ENCODE measurements at regions of chrX and their contacts with region 1.

Region 1: DNA sequence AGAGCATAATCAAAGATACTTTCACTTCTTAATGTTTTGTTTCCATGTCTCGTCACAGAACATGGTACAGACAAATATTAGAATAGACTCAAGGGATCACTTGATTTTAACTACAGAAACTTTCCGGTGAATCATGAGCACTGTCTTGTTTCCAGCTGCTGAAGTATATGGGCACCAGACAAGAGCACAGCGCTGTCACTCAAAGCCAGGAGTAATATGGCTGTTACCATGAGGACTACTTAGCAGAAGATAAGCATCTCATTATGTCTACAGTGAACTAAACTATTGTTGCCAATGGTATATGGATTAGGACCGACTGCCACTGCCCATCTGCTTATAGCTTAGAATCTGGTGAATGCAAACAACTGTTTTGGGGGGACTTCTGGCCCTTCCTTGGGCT is 34.3 kb downstream of the MECP2 start:
- DNase-seq: no peak
- H3K4me3 ChIP-seq: no peak overlapping the region
- H3K27ac ChIP-seq: no peak overlapping the region
- H3K4me1 ChIP-seq: peaks cover 7% of the 10 kb centered on the region
- H3K27me3 ChIP-seq: no peaks in the 10 kb centered on the region
- CTCF ChIP-seq: no peak
- EP300 ChIP-seq: no peak
- POLR2A ChIP-seq: no peak

Region 2: GRCh38 chrX:153794018-153794896 is 269.0 kb before region 1 on chrX and contains the starts of genes IDH3G and SSR4:
- intact Hi-C with region 1: loop called in 1 of 4 experiments (anchors 10 kb)
- DNase-seq: peak; percentile 89 to 95 (median 94)
- H3K4me3 ChIP-seq: peak within 1 kb of the TSS; percentile 55
- H3K27ac ChIP-seq: peak within 1 kb of the TSS; percentile 94
- H3K4me1 ChIP-seq: peaks cover 5% of the 10 kb centered on the region
- H3K27me3 ChIP-seq: no peaks in the 10 kb centered on the region
- CTCF ChIP-seq: no peak
- EP300 ChIP-seq: no peak
- POLR2A ChIP-seq: peak; percentile 33
- total RNA-seq, gene IDH3G: 48.5 to 58.5 (median 54.7) TPM
- total RNA-seq, gene SSR4: 123 to 181 (median 155) TPM

Region 3: DNA sequence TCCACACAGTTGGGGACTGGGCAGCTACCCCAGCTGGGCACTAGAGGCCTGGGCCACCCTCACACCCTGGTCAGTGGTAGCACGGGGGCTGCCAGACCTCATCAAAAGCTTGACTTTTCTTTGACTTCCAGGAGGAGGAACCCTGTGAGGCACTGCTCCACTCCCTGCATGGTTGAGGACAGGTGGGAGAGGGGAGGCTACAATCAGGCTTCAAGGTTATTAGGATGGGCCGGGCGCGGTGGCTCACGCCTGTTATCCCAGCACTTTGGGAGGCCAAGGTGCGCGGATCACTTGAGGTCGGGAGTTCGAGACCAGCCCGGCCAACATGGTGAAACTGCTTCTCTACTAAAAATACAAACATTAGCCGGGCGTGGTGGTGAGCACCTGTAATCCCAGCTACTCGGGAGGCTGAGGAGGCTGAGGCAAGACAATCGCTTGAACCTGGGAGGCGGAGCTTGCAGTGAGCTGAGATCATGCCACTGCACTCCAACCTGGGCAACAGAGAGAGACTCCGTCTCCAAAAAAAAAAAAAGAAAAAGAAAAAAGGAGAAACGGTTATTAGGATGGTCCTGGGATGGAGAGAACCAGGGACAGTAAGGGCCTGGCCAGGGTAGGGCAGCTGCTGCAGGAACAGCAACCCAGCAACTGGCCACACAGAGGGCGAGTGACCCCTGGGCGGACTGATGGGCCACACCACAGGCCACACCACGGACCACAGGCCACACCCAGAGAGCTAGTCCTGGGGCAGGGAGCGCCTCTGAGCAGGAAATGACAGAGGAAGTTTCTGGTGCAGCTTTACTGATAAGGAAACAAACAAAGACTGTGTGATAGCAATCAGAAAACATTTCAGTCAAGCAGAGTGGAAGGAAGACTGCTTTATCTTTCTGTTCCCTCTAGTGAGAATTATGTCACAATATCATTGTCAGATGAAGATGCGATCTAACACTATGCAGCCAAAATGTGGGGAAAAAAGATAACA is 60.3 kb after region 1 on chrX:
- intact Hi-C with region 1: loop called in 1 of 4 experiments (anchors 2 kb)
- DNase-seq: no peak
- H3K4me3 ChIP-seq: no peak overlapping the region
- H3K27ac ChIP-seq: no peak overlapping the region
- H3K4me1 ChIP-seq: no peaks in the 10 kb centered on the region
- H3K27me3 ChIP-seq: no peaks in the 10 kb centered on the region
- CTCF ChIP-seq: no peak
- EP300 ChIP-seq: no peak
- POLR2A ChIP-seq: no peak

Measured in ovary (tissue), 10 donors.